Activated T-helper 2 cell treated with anti-CD3 and anti-CD28 coated beads, Interferon-gamma antibody, Interleukin-2, Interleukin-4, amounts not matched to agents 10 μg/mL and 5 μg/mL and 100 μg/mL, durations not matched to agents 14 hours and 24 hours and 36 hours (primary cell): ENCODE measurements at regions of chr7 and their contacts with region 1.

Region 1: DNA sequence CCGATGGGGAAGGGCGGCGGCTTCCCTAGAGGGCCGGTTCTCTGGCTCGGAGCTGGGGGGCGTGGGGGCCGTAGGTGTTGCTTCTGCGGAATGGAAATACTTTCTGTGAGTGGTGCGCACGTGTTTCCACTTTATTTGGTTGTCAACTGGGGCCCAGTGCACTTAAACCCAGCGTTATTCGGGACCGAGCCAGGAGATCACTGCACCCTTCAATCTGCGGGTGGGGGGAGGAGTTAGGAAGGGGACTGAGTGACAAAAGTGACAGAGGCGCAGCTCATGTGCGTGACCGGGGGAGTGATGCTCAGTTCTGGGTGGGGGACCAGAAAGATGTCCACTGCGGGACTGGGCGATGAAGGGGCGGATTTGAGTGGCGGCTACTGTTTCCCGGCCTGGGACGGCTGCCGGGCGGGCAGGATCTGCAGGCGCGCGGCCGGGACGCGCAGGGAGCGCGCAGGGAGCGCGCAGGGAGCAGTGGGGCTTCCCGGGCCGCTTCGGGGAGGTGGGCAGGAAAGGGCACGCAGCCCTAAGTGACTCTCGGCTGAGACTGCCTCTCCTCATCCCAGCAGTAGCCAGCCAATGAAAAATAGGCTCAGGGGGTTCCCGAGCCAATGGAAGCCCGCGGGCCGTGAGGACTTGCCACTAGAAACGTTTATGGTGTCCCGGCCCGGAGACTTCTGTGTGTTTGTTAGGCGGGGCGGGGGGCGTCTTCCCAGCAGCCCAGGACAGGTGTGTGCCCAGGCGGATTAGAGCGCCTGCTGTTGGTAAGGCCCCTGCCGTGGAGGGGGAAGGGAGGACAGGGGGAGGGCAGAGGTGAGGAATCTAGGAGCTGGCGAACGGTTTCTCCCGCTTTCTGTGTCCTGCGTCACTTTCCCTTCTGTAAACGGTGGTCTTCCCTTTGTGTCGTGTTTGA is 54.3 kb upstream of the KDM7A start:
- DNase-seq: peak; percentile 45
- H3K4me3 Mint-ChIP-seq: peak overlapping the region; percentile 86
- H3K27ac Mint-ChIP-seq: peak overlapping the region; percentile 92
- H3K4me1 Mint-ChIP-seq: peaks cover 27% of the 10 kb centered on the region
- H3K27me3 Mint-ChIP-seq: no peaks in the 10 kb centered on the region

Region 2: GRCh38 chr7:140062528-140063299 is 168.4 kb before region 1 on chr7 and contains the start of gene PARP12:
- intact Hi-C with region 1: loop called (anchors 5 kb)
- DNase-seq: peak; percentile 88
- H3K4me3 Mint-ChIP-seq: peak within 1 kb of the TSS; percentile 81
- H3K27ac Mint-ChIP-seq: peak within 1 kb of the TSS; percentile 71
- H3K4me1 Mint-ChIP-seq: peaks cover 39% of the 10 kb centered on the region
- H3K27me3 Mint-ChIP-seq: peaks cover 4% of the 10 kb centered on the region
- total RNA-seq, gene PARP12: 23.6 and 24.6 TPM in 2 replicates

Region 3: DNA sequence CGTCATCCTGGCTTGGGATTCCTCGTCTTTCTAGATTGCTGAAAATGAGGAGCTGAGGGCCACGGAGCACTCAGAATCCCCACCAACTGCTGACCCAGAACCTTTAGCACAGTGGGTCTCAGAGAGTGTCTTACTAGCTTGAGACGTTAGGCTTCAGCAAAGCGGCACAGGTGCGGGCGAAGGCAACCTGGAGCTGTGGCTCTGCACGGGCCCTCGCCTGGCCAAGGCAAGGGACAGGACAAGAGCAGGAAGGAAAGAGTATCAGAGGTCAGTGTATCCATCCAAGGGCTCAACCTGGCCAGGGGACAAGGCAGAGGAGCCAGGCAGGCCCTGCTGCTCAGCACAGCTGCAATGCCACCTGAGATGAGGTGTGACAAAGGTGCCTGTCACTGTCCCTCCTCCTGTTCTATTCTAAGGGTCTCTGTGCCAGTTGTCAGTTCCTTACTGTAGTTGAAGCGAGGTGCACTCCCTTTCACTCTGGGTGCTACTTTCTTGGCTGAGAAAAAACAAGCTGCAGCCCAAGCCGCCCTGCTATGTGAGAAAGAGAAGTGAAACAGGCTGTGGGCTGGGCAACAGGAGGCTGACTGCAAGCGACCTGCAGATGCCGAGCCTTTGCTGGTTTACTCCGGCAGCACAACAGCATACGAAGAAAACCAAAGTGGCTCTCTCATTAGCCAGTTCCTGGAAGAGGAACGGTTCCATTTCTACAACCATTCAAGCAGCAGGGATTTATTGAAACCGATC is 21.1 kb before region 1 on chr7:
- intact Hi-C with region 1: loop called (anchors 1 kb)
- DNase-seq: peak; percentile 62
- H3K4me3 Mint-ChIP-seq: peak overlapping the region; percentile 49
- H3K27ac Mint-ChIP-seq: peak overlapping the region; percentile 70
- H3K4me1 Mint-ChIP-seq: peaks cover 61% of the 10 kb centered on the region
- H3K27me3 Mint-ChIP-seq: peaks cover 3% of the 10 kb centered on the region

Region 4: DNA sequence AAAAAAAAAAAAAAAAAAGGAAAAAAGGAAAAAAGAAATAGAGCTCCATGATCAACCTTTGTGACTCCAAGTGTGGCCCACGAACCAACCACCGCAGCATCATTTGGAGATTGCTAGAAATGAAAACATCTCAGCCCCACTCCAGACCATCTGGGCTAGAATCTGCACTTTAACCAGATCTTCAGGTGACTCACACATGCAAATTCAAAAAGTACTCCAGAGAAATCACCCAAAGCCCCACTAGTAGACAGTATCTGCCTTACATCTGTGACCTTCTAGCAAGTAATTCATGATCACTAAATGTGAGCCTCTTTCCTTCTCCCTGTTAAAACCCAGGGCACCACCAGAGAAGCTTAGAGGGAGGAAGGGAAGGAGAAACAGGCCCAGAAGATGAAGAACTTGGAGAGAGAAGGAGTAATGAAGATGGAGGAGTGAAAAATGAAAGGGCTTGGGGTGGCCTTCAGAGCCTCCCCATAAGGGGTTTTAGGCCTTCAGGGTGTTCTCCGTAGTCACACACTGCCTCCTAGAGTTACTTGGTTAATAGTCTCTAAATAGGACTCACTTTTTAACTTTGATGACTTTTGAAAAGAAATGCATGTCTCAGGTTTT is 73.2 kb after region 1 on chr7:
- intact Hi-C with region 1: loop called (anchors 2 kb)
- DNase-seq: peak; percentile 35
- H3K4me3 Mint-ChIP-seq: no peak overlapping the region
- H3K27ac Mint-ChIP-seq: peak overlapping the region; percentile 82
- H3K4me1 Mint-ChIP-seq: peaks cover 7% of the 10 kb centered on the region
- H3K27me3 Mint-ChIP-seq: no peaks in the 10 kb centered on the region